Activated CD8-positive, alpha-beta T cell treated with anti-CD3 and anti-CD28 coated beads, Interleukin-2, amount 10 ng/mL, durations not matched to agents 7 days and 5 days (primary cell): ENCODE measurements at regions of chr13 and their contacts with region 1.

Region 1: GRCh38 chr13:77480066-77480465 is 55.4 kb upstream of the SCEL start:
- DNase-seq: no peak
- ATAC-seq: no peak
- H3K4me3 Mint-ChIP-seq: no peak overlapping the region
- H3K27ac Mint-ChIP-seq: no peak overlapping the region
- H3K4me1 Mint-ChIP-seq: peaks cover 10% of the 10 kb centered on the region
- H3K27me3 Mint-ChIP-seq: peaks cover 2% of the 10 kb centered on the region

Region 2: GRCh38 chr13:77136902-77137420 is 343.1 kb before region 1 on chr13:
- CTCF ChIA-PET with region 1: interaction called, 11 read pairs
- POLR2A ChIA-PET with region 1: no interaction called
- DNase-seq: no peak
- ATAC-seq: no peak
- H3K4me3 Mint-ChIP-seq: no peak overlapping the region
- H3K27ac Mint-ChIP-seq: no peak overlapping the region
- H3K4me1 Mint-ChIP-seq: no peaks in the 10 kb centered on the region
- H3K27me3 Mint-ChIP-seq: no peaks in the 10 kb centered on the region

Region 3: GRCh38 chr13:77316430-77316829 is 163.6 kb before region 1 on chr13:
- CTCF ChIA-PET with region 1: interaction called, 20 read pairs
- POLR2A ChIA-PET with region 1: no interaction called
- DNase-seq: no peak
- ATAC-seq: no peak
- H3K4me3 Mint-ChIP-seq: no peak overlapping the region
- H3K27ac Mint-ChIP-seq: no peak overlapping the region
- H3K4me1 Mint-ChIP-seq: peaks cover 67% of the 10 kb centered on the region
- H3K27me3 Mint-ChIP-seq: no peaks in the 10 kb centered on the region

Region 4: DNA sequence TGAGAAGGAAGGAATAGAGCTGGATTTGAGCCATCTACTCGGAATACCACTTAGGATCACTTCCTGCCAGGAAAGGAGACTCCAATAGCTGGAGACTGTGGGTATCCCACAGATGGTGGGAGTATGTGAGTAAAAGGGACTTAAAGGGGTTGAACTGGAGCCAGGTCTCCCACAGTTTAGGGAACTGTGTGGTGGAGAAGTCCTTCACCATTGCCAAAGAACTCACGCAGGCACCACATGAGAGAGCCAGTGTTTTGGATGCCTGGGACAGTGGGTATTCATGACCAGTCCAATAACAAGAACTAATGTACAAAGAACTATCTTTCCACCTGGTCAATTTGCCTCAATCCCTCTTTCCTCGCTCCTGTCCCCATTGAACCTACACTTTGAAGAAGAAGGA is 128.8 kb before region 1 on chr13:
- CTCF ChIA-PET with region 1: no interaction called
- POLR2A ChIA-PET with region 1: no interaction called
- DNase-seq: no peak
- ATAC-seq: no peak
- H3K4me3 Mint-ChIP-seq: no peak overlapping the region
- H3K27ac Mint-ChIP-seq: no peak overlapping the region
- H3K4me1 Mint-ChIP-seq: peaks cover 13% of the 10 kb centered on the region
- H3K27me3 Mint-ChIP-seq: no peaks in the 10 kb centered on the region

Region 5: DNA sequence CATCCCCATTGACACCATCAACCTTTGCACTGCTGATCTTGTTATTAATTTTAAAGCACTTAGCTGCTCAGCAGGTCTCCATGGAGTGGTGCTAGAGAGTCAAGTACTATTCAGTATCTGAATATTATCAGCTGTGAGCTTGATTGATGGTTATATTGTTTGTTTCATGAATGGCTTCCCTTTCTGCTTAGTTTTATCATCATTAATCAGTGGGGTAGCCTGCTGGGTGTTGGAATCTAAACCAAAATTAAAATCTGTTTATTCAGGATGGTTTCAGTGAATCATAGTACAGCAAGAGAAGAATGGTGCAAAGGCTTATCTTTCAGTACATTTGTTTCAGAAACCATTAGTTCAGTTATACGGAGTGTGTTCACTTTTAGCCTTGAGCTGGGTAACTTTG is 12.9 kb after region 1 on chr13:
- CTCF ChIA-PET with region 1: interaction called, 24 read pairs
- POLR2A ChIA-PET with region 1: interaction called, 3 read pairs
- DNase-seq: no peak
- ATAC-seq: peak; percentile 44
- H3K4me3 Mint-ChIP-seq: no peak overlapping the region
- H3K27ac Mint-ChIP-seq: no peak overlapping the region
- H3K4me1 Mint-ChIP-seq: no peaks in the 10 kb centered on the region
- H3K27me3 Mint-ChIP-seq: no peaks in the 10 kb centered on the region